ENCODE measurements at regions of chr4 and their contacts with region 1.

Region 1: DNA sequence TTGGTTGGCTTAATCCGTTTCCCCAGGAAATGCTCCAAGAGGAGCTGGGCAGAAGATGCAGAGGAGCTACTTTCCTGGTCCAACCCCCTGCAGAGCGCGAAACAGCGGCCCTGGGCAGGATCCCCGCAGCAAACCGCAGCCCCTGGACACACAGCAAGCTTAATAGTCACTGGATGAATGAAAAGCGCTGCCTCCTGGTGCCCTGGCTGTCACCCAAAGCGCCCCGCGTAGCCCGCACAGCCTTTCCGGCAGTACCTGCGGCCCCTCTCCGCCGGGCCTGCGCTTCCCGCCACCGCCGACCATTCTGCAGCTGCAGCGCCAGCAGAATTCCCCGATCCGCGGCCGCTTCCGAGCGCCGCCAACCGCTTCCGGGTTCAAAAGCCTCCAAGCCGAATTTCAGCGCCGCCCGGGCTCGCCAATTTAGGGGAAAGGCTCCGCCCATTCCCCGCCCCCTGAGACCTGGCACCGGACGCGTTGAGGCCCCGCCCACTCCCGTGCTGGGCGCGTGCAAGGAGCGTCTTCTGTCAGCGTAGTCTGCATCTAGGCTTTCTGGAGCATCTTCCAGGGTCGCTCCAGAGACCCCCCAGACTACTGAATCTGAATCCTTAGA is at the start of gene HPF1:
- DNase-seq: peak; percentile 89
- H3K4me3 ChIP-seq: peak within 1 kb of the TSS; percentile 84 to 95 (median 88)
- H3K27ac ChIP-seq: peak within 1 kb of the TSS; percentile 32
- H3K4me1 ChIP-seq: peaks cover 9% of the 10 kb centered on the region
- H3K27me3 ChIP-seq: no peaks in the 10 kb centered on the region
- CTCF ChIP-seq: no peak
- total RNA-seq, gene HPF1: 14.7 to 20.0 TPM

Region 2: DNA sequence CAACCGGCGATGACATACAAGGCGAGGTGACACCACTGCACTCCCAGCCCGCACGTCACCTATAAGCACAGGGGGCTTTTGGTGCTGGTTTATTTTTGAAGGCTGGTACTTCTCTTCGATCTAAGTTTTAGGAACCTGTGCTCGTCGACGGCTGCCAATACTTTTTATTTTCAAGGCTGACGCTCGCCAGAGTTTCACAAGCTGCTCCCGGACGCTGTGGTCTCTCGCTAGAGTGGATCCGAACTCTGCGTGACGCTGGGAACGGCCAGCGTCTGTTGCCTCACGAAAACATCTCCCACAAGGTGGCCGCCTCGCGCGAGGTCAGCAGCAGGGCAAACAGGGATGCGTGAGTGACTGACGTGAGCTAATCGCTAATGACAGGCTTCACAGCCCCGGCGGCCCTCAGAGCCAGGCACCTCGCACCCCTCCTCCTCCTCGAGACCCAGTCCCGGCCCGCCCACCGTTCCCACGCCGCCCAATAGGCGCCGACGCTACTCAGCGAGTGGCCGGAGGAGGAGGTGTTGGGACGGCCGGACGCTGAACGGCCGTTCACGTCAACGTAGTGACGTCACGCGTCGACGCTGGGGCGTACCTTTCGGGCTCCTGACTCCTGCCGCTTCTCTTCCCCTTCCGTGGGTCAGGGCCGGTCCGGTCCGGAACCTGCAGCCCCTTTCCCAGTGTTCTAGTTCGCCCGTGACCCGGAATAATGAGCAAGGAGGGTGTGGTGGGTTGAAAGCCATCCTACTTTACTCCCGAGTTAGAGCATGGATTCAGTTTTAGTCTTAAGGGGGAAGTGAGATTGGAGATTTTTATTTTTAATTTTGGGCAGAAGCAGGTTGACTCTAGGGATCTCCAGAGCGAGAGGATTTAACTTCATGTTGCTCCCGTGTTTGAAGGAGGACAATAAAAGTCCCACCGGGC is 137.5 kb before region 1 on chr4 and contains the start of gene CLCN3:
- CTCF ChIA-PET with region 1: no interaction called
- dilution Hi-C with region 1: no loop called
- in situ Hi-C with region 1: no loop called
- intact Hi-C with region 1: loop called (anchors 10 kb)
- DNase-seq: peak; percentile 99
- H3K4me3 ChIP-seq: peak within 1 kb of the TSS; percentile 77 to 98 (median 83)
- H3K27ac ChIP-seq: peak within 1 kb of the TSS; percentile 99
- H3K4me1 ChIP-seq: peaks cover 13% of the 10 kb centered on the region
- H3K27me3 ChIP-seq: no peaks in the 10 kb centered on the region
- CTCF ChIP-seq: peak in 1 of 2 donors; percentile 16
- total RNA-seq, gene CLCN3: 29.4 to 30.2 TPM

Region 3: GRCh38 chr4:169745291-169745690 is 12.4 kb before region 1 on chr4:
- CTCF ChIA-PET with region 1: interaction called, 23 read pairs
- dilution Hi-C with region 1: no loop called
- in situ Hi-C with region 1: no loop called
- intact Hi-C with region 1: no loop called
- DNase-seq: peak; percentile 60
- H3K4me3 ChIP-seq: no peak overlapping the region
- H3K27ac ChIP-seq: no peak overlapping the region
- H3K4me1 ChIP-seq: no peaks in the 10 kb centered on the region
- H3K27me3 ChIP-seq: no peaks in the 10 kb centered on the region
- CTCF ChIP-seq: no peak

Region 4: GRCh38 chr4:169802873-169803272 is 45.2 kb after region 1 on chr4:
- CTCF ChIA-PET with region 1: no interaction called
- dilution Hi-C with region 1: loop called (anchors 10 kb)
- in situ Hi-C with region 1: no loop called
- intact Hi-C with region 1: no loop called
- DNase-seq: no peak
- H3K4me3 ChIP-seq: no peak overlapping the region
- H3K27ac ChIP-seq: no peak overlapping the region
- H3K4me1 ChIP-seq: no peaks in the 10 kb centered on the region
- H3K27me3 ChIP-seq: no peaks in the 10 kb centered on the region
- CTCF ChIP-seq: no peak